CD4-positive, alpha-beta T cell (primary cell): ENCODE measurements at regions of chr16 and their contacts with region 1.

Region 1: DNA sequence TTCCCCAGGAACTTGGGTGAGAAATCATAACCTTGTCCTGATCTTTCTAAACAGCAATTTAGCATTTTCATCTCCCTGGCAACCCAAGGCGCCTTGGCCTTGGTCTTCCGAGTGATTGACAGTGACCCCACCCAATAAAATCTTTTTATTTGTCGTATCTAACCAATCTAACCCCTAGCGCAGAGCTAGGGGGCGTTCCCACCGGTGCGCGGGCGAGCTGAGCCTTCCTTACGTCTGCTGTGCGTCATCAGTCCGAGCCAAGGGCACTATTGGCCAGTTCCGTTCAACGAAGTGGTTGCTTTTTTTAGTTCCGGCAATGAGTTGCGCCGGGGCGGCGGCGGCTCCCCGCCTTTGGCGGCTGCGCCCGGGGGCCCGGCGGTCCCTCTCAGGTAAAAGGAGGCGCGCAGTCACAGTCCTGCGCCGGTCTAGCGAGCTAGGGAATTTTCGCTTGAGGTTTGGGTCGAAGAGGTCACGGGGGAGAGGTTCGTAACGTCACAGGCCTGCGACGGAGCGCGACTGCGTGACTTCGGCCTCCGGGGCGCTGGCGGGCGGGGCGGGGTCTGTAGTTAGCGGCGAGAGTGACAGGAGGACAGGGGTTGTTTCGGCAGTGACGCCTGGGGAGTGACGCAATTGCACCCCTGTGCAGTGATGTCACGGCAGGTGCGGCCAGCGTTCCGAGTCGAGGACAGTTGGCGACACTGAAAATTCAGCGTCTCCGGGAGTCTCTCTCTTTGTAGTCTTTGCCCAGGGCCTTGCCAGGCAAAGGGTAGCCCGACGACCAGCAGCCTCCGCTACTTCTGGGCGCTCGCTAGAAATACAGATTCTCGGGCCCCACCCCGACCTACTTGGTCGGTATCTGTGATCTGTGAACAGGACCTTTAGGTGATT is at the start of gene COQ7:
- DNase-seq: peak; percentile 93 to 100 (median 97)
- ATAC-seq: peak; percentile 86
- H3K4me3 ChIP-seq: peak within 1 kb of the TSS; percentile 84
- H3K4me3 Mint-ChIP-seq: peak within 1 kb of the TSS; percentile 96
- H3K27ac ChIP-seq: peak within 1 kb of the TSS; percentile 99 to 100
- H3K27ac Mint-ChIP-seq: peak within 1 kb of the TSS; percentile 86
- H3K4me1 ChIP-seq: peaks cover 12% of the 10 kb centered on the region
- H3K4me1 Mint-ChIP-seq: peaks cover 15% of the 10 kb centered on the region
- H3K27me3 ChIP-seq: no peaks in the 10 kb centered on the region
- H3K27me3 Mint-ChIP-seq: no peaks in the 10 kb centered on the region
- CTCF ChIP-seq: no peak
- total RNA-seq, gene COQ7: 7.9 to 9.1 TPM

Region 2: DNA sequence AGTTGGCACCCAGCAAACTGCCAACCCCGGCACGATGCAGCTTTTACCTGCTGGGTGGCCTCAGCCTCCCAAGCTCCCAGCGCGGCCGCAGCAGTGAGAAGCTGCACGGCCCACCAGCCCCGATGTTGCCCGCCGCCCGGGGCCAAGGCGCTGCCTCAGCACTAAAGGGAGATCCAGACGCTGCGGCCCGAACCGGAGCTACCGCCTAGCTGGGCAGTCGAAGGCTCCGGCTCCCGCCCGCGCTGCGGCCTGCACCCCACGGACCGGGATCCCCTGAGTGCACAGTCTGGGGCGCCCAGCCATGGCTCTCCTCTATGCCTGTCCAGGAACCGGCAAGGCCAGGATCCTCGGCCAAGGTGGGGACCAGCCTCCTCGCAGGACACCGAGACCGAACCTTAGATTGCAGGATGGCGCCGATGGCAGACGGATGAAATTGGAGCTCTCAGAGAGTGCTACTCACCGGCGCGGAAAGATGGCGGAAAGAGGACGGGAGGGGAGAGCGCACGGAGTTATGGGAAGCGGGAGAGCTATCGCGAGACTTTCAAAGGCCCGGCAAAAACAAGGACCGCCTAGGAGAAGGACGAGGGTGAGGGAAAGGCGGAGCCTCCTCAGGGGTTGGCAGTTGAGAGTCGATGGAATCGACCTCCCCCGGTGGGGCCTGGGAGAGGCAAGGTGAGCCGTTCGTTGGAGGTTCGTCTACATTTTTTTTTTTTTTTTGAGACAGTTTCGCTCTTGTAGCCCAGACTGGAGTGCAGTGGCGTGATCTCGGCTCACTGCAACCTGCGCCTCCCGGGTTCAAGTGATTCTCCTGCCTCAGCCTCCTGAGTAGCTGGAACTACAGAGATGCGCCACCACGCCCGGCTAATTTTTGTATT is 277.5 kb before region 1 on chr16 and contains the start of gene RPS15A:
- CTCF ChIA-PET with region 1: no interaction called
- POLR2A ChIA-PET with region 1: interaction called, 9 read pairs
- intact Hi-C with region 1: loop called in 1 of 2 experiments (anchors 5 kb)
- DNase-seq: peak; percentile 84 to 99 (median 89)
- ATAC-seq: peak; percentile 94
- H3K4me3 ChIP-seq: peak within 1 kb of the TSS; percentile 79
- H3K4me3 Mint-ChIP-seq: peak within 1 kb of the TSS; percentile 92
- H3K27ac ChIP-seq: peak within 1 kb of the TSS; percentile 63 to 66
- H3K27ac Mint-ChIP-seq: peak within 1 kb of the TSS; percentile 83
- H3K4me1 ChIP-seq: peaks cover 47% of the 10 kb centered on the region
- H3K4me1 Mint-ChIP-seq: peaks cover 49% of the 10 kb centered on the region
- H3K27me3 ChIP-seq: no peaks in the 10 kb centered on the region
- H3K27me3 Mint-ChIP-seq: no peaks in the 10 kb centered on the region
- CTCF ChIP-seq: no peak
- total RNA-seq, gene RPS15A: 3,821 to 3,943 TPM

Region 3: GRCh38 chr16:18932243-18932981 is 135.2 kb before region 1 on chr16:
- CTCF ChIA-PET with region 1: no interaction called
- POLR2A ChIA-PET with region 1: no interaction called
- intact Hi-C with region 1: loop called in 1 of 2 experiments (anchors 2 kb)
- DNase-seq: no peak
- ATAC-seq: no peak
- H3K4me3 ChIP-seq: no peak overlapping the region
- H3K4me3 Mint-ChIP-seq: no peak overlapping the region
- H3K27ac ChIP-seq: no peak overlapping the region
- H3K27ac Mint-ChIP-seq: no peak overlapping the region
- H3K4me1 ChIP-seq: no peaks in the 10 kb centered on the region
- H3K4me1 Mint-ChIP-seq: peaks cover 5% of the 10 kb centered on the region
- H3K27me3 ChIP-seq: no peaks in the 10 kb centered on the region
- H3K27me3 Mint-ChIP-seq: no peaks in the 10 kb centered on the region
- CTCF ChIP-seq: no peak

Region 4: GRCh38 chr16:19521471-19522396 is 454.1 kb after region 1 on chr16 and contains the start of gene GDE1:
- CTCF ChIA-PET with region 1: no interaction called
- POLR2A ChIA-PET with region 1: interaction called, 10 read pairs
- intact Hi-C with region 1: loop called (anchors 2 to 5 kb)
- DNase-seq: peak; percentile 85 to 97 (median 93)
- ATAC-seq: peak; percentile 76
- H3K4me3 ChIP-seq: peak within 1 kb of the TSS; percentile 93
- H3K4me3 Mint-ChIP-seq: peak within 1 kb of the TSS; percentile 99
- H3K27ac ChIP-seq: peak within 1 kb of the TSS; percentile 58 to 78
- H3K27ac Mint-ChIP-seq: peak within 1 kb of the TSS; percentile 84
- H3K4me1 ChIP-seq: peaks cover 55% of the 10 kb centered on the region
- H3K4me1 Mint-ChIP-seq: peaks cover 69% of the 10 kb centered on the region
- H3K27me3 ChIP-seq: no peaks in the 10 kb centered on the region
- H3K27me3 Mint-ChIP-seq: no peaks in the 10 kb centered on the region
- CTCF ChIP-seq: peak; percentile 27
- total RNA-seq, gene GDE1: 22.0 to 22.2 TPM

Region 5: DNA sequence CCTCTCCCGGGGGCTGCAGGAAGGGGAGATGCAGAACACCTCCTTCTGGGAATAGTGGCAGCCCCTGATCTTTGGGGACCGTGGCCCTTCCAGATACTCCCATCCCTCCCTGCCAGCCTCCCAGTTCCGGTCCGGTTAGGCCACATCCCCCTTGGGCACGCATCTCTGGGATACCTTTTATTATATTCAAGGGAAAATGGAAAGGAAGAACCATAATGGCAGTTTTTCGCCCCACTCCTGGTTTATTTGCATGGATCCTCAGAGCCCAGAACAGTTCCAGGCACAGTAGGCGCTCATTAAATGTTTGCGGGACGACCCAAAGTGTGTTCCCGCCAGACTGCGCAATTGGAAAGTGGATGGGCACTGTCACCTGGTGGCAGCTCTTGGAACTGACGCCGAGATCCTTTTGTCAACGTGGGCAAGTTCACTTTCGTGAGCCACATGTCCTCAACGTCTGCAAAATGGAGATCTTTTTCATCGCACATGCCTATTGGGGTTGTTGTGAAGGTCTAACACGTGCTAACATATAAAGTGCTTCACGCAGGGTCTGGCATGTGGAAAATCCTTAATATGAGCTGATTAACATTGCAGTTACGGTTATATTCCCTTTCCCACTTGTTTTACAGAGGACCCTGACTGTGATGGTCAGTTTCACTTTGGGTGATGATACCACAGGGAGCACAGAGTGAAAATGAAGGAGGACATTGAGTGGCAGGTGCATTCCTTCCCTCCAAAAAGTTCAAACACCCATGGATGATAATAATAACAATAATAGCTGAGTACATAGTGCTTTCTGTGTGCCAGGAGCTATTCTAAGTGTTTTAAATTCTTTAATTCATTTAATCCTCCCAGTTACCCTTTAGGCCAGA is 818.7 kb after region 1 on chr16:
- CTCF ChIA-PET with region 1: no interaction called
- POLR2A ChIA-PET with region 1: no interaction called
- intact Hi-C with region 1: loop called in 1 of 2 experiments (anchors 5 kb)
- DNase-seq: peak; percentile 67 to 90 (median 79)
- ATAC-seq: peak; percentile 69
- H3K4me3 ChIP-seq: peak overlapping the region; percentile 69
- H3K4me3 Mint-ChIP-seq: peak overlapping the region; percentile 91
- H3K27ac ChIP-seq: no peak overlapping the region
- H3K27ac Mint-ChIP-seq: peak overlapping the region; percentile 22
- H3K4me1 ChIP-seq: peaks cover 34% of the 10 kb centered on the region
- H3K4me1 Mint-ChIP-seq: peaks cover 29% of the 10 kb centered on the region
- H3K27me3 ChIP-seq: peaks cover 32 to 35% of the 10 kb centered on the region in 2 experiments
- H3K27me3 Mint-ChIP-seq: peaks cover 33% of the 10 kb centered on the region
- CTCF ChIP-seq: peak; percentile 99